Activated naive CD4-positive, alpha-beta T cell treated with anti-CD3 and anti-CD28 coated beads for 36 hours (primary cell): ENCODE measurements at regions of chr5 and their contacts with region 1.

Region 1: DNA sequence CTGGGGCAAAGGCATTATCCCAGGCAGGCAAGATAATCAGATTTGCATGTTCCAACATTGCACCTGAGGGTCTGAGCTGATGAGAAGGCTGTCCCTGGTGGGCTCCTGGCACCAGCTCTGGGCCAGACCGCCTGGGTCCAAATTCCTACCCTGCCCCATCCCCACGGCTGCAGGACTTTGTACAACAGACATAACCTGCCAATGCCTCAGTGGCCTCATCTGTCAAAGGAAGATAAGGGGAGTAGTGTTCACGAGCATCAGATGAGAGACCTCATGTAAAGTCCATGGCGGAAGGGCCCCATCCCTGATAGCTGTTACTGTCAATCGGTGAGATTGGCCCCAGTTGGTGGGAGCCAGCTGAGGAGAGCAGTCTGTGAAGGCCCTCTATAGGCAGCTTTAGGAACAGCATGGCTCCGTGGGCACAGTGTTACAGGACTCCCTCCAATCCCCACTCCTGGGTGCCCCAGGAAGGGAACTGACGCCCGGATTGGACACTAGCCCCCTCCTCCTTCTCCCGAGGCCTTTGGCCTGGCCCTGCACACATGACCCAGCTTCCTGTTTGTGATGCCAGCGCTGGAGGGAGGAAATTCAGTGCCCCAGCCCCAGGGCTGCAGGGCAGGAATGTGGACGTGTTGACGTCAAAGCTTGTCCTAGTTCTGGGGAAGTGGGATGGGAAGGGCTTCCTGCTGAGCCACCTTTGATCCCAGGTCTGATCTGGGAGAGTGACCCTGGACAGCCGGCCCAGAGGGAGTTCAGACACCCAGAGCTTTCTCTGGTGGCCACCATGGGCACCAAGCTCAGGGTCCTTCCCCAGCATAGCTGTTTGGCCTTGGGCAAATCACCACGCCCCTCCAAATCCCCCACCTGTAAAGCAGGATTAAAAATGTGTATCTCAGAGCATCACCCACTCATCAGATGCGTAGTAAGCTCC is 56.2 kb downstream of the DUSP1 start:
- DNase-seq: peak; percentile 75
- H3K4me3 Mint-ChIP-seq: no peak overlapping the region
- H3K27ac Mint-ChIP-seq: no peak overlapping the region
- H3K4me1 Mint-ChIP-seq: no peaks in the 10 kb centered on the region
- H3K27me3 Mint-ChIP-seq: peaks cover 5% of the 10 kb centered on the region

Region 2: GRCh38 chr5:172751766-172752510 is 37.2 kb after region 1 on chr5:
- CTCF ChIA-PET with region 1: interaction called, 16 read pairs
- intact Hi-C with region 1: no loop called
- DNase-seq: no peak
- H3K4me3 Mint-ChIP-seq: no peak overlapping the region
- H3K27ac Mint-ChIP-seq: no peak overlapping the region
- H3K4me1 Mint-ChIP-seq: no peaks in the 10 kb centered on the region
- H3K27me3 Mint-ChIP-seq: no peaks in the 10 kb centered on the region

Region 3: GRCh38 chr5:172849606-172850453 is 135.1 kb after region 1 on chr5:
- CTCF ChIA-PET with region 1: interaction called, 4 read pairs
- intact Hi-C with region 1: loop called (anchors 2 kb)
- DNase-seq: no peak
- H3K4me3 Mint-ChIP-seq: no peak overlapping the region
- H3K27ac Mint-ChIP-seq: no peak overlapping the region
- H3K4me1 Mint-ChIP-seq: peaks cover 34% of the 10 kb centered on the region
- H3K27me3 Mint-ChIP-seq: no peaks in the 10 kb centered on the region

Region 4: DNA sequence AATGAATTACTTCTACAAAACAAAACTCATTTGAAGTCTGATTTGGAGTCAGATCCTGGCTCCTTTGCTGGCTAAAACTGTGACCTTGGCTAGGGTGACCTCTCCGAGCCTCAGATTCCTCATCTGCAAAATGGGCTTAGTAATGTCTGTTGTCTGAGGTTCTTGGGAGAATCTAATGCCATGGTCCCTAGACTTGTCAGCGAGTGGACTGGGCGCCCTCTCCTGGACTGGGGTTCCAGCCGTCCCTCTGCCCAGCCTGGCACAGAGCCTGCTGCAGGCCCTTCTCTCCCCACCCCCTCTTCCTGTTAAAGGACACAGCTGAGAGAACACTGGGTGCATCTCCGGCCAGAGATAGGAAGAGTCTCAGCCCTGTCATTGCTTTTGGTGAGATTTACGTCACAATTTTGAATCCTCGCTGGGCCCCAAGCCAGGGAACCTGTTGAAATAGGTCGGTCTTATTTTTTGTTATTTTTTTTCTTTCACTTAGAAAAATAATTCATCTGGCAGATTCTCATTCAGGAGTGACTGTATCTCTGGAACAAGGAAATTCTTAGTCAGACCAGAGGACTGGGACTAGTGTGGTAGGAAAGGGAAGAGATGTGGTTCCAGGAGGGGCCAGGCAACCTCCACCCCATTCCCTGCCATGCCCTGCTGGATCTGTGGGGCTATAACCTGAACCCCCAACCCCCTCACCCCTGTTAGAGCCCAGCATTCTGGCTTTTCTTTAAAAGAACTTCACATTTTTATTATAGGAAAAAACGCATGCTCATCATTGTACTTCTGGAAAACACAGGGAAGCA is 196.3 kb after region 1 on chr5:
- CTCF ChIA-PET with region 1: interaction called, 12 read pairs
- intact Hi-C with region 1: loop called (anchors 1 kb)
- DNase-seq: peak; percentile 63
- H3K4me3 Mint-ChIP-seq: no peak overlapping the region
- H3K27ac Mint-ChIP-seq: no peak overlapping the region
- H3K4me1 Mint-ChIP-seq: no peaks in the 10 kb centered on the region
- H3K27me3 Mint-ChIP-seq: no peaks in the 10 kb centered on the region

Region 5: GRCh38 chr5:173204185-173204979 is 489.6 kb after region 1 on chr5:
- CTCF ChIA-PET with region 1: interaction called, 3 read pairs
- intact Hi-C with region 1: loop called (anchors 5 kb)
- DNase-seq: peak; percentile 50
- H3K4me3 Mint-ChIP-seq: no peak overlapping the region
- H3K27ac Mint-ChIP-seq: no peak overlapping the region
- H3K4me1 Mint-ChIP-seq: no peaks in the 10 kb centered on the region
- H3K27me3 Mint-ChIP-seq: peaks cover 32% of the 10 kb centered on the region